WTC11 (cell line): ENCODE measurements at regions of chr10 and their contacts with region 1.

Region 1: GRCh38 chr10:95246579-95247051 is 44.2 kb downstream of the PDLIM1 start:
- DNase-seq: peak; percentile 86
- ATAC-seq: peak; percentile 71
- H3K4me3 Mint-ChIP-seq: no peak overlapping the region
- H3K27ac Mint-ChIP-seq: no peak overlapping the region
- H3K4me1 Mint-ChIP-seq: peaks cover 52% of the 10 kb centered on the region
- H3K27me3 Mint-ChIP-seq: no peaks in the 10 kb centered on the region
- CTCF ChIP-seq: peak; percentile 87

Region 2: DNA sequence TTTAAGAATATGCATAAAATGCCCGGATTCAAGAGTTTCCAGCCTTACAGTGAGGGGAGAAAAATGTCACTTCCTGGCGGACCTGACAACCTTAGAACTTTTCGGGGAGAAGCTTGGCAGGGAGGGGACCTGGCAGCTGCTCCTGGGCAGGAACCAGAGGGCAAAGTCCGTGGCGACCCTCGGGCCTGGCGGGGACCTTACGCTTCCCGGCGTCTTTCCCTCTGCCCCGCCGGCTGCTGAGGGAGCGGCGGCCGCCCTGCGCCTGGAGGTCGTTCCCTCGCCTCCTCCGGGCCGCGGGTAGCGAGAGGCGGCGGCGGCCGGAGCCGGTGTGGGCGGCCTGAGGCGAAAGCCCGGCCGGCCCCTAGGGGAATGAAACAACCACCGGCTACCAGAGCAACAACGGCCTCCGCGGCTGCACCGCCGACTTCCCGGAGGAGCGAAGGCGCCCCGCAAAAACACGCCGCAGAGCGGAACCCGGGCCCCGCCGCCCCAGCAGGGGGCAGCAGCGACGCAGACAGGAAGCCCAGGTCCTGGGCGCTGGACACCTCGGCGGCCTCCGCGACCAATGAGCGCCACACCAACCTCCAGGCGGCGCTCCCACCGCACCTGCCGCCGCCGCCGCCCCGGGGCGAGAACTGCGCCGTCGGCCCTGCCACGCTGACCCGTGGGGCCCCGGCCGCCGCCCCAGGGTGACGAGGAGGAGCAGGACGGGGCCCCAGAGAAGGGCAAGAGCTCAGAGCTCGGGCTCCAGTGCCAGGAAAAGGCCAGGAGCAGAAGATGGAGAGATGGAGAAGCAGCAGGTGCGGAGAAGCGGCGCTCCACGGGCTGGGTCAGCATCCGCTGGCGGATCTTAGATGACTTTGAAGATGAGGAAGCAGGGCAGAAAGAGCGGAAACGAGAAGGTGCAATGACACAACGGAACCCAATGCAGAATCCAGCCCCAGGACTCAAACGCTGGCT is 63.1 kb before region 1 on chr10:
- CTCF ChIA-PET with region 1: interaction called, 44 read pairs
- POLR2A ChIA-PET with region 1: no interaction called
- DNase-seq: peak; percentile 94
- ATAC-seq: peak; percentile 96
- H3K4me3 Mint-ChIP-seq: peak overlapping the region; percentile 72
- H3K27ac Mint-ChIP-seq: peak overlapping the region; percentile 67
- H3K4me1 Mint-ChIP-seq: peaks cover 19% of the 10 kb centered on the region
- H3K27me3 Mint-ChIP-seq: no peaks in the 10 kb centered on the region
- CTCF ChIP-seq: peak; percentile 81

Region 3: DNA sequence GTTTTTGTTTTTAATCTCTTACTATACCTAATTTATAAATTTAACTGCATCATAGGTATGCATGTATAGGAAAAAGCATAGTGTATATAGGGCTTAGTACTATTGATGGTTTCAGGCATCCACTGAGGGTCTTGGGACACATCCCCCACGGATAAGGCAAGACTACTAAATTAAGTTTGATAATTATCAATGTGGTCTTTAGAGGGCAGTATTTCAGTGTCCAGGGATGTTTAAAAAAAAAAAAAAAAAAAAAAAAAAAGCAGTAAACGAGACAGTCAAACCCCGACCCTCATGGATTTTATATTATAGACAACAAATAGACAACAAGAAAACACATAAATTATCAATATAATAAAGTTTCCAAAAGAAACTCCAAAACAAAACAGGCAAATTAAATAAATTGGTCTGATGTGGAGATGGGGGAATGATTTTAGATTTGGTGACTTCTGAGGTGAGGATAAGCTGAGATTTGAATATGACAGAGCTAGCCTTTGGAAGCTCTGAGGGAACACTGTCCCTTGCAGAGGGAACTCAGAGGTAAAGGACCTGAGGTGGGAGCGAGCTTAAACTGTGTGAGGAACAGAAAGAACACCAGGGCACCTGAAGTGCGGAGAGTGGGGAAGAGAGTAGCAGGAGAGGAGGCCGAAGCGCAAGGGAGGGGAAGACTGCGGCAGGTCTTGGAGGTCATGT is 37.8 kb before region 1 on chr10:
- CTCF ChIA-PET with region 1: interaction called, 17 read pairs
- POLR2A ChIA-PET with region 1: no interaction called
- DNase-seq: no peak
- ATAC-seq: peak; percentile 82
- H3K4me3 Mint-ChIP-seq: no peak overlapping the region
- H3K27ac Mint-ChIP-seq: peak overlapping the region; percentile 92
- H3K4me1 Mint-ChIP-seq: peaks cover 17% of the 10 kb centered on the region
- H3K27me3 Mint-ChIP-seq: no peaks in the 10 kb centered on the region
- CTCF ChIP-seq: no peak

Region 4: DNA sequence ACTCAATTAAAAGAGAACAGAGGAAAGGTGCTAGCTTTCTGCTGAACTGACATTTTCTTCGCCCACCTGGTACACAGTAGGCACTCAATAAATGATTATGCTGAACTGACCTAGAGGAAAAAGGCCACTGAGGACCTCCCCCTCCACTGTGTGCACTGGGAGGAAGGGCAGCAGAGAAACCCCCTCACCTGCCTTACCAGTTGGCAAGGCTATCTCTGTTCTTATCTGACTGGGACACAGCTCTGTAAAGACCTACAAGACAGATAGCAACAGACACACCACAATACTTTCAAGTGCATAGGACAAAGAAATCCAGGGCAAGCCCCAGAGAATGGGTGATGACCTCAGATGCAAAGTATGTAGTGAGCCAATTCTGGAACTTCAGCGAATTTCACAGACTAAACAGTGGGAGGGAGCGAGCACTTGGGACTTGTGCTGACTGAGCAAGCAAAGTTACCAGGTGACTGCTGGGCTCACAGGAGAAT is 13.8 kb after region 1 on chr10:
- CTCF ChIA-PET with region 1: interaction called, 22 read pairs
- POLR2A ChIA-PET with region 1: no interaction called
- DNase-seq: no peak
- ATAC-seq: no peak
- H3K4me3 Mint-ChIP-seq: no peak overlapping the region
- H3K27ac Mint-ChIP-seq: peak overlapping the region; percentile 58; the same call in 1 of the 2 replicates
- H3K4me1 Mint-ChIP-seq: peaks cover 52% of the 10 kb centered on the region
- H3K27me3 Mint-ChIP-seq: no peaks in the 10 kb centered on the region
- CTCF ChIP-seq: no peak

Region 5: GRCh38 chr10:95279042-95279820 is 32.6 kb after region 1 on chr10:
- CTCF ChIA-PET with region 1: interaction called, 20 read pairs
- POLR2A ChIA-PET with region 1: no interaction called
- DNase-seq: no peak
- ATAC-seq: no peak
- H3K4me3 Mint-ChIP-seq: no peak overlapping the region
- H3K27ac Mint-ChIP-seq: peak overlapping the region; percentile 85
- H3K4me1 Mint-ChIP-seq: peaks cover 72% of the 10 kb centered on the region
- H3K27me3 Mint-ChIP-seq: no peaks in the 10 kb centered on the region
- CTCF ChIP-seq: no peak

Region 6: DNA sequence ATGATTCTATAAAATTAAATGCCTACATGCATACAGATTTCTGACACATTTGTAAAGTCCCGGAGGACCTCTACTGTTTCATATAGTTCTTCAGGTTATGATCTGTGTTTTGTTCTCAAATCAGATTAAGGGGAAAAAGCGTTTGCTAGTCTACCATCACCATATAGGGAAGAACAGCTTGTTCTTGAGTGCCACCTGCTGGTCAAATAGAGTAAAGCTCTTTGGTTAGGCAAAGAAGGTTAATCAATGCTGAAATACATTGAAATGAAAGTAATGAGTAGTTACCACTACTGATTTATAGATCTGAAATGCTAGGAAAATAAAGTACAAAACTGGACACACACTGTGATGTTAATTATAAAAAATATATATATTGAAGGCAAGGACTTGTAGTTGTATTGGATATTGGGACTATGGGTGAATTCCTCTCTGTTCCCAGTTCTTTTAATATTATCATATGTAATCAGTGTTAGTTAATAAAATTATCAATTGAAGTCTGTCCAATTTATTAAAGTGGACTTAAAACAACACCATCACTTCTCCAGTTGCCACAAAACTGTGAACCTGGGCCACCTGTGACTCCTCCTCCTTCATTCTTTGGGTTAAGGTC is 116.8 kb after region 1 on chr10:
- CTCF ChIA-PET with region 1: interaction called, 69 read pairs
- POLR2A ChIA-PET with region 1: interaction called, 4 read pairs
- DNase-seq: no peak
- ATAC-seq: peak; percentile 60
- H3K4me3 Mint-ChIP-seq: no peak overlapping the region
- H3K27ac Mint-ChIP-seq: no peak overlapping the region; the same call in 1 of the 2 replicates
- H3K4me1 Mint-ChIP-seq: peaks cover 22% of the 10 kb centered on the region
- H3K27me3 Mint-ChIP-seq: no peaks in the 10 kb centered on the region
- CTCF ChIP-seq: peak; percentile 75